ENCODE measurements at regions of chr6 and their contacts with region 1.

Region 1: GRCh38 chr6:163427498-163428254 is 13.2 kb downstream of the QKI start:
- DNase-seq: no peak
- ATAC-seq: peak in 5 of 8 donors; percentile 38 to 54 (median 41)
- H3K4me3 ChIP-seq: peak overlapping the region in 2 of 10 donors; percentile 9 to 12
- H3K27ac ChIP-seq: peak overlapping the region in 5 of 10 donors; percentile 1 to 36 (median 8)
- H3K4me1 ChIP-seq: peaks cover 3 to 100% (median 99%) of the 10 kb centered on the region in 9 donors
- H3K27me3 ChIP-seq: no peaks in the 10 kb centered on the region
- CTCF ChIP-seq: peak; percentile 9 to 65 (median 44)

Region 2: DNA sequence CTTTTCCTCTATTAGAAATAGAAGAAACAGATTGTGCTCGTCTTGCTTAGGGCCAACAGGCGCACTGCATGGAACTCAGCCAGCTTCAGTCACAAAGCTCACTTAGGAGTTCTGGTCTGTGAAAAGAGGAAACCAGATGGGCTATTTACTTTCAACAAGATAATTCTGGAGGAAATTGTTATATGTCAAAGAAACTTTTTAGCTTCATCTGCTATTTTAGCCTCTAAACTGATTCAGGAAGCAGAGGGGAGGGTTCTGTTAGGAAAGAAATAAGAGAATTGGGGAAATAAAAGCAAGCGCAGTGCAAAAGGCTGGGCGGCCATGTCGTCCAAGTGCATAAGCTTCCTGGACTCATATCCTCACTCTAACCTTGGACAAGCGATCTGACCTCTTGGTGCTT is 721.4 kb before region 1 on chr6:
- intact Hi-C with region 1: no loop called
- DNase-seq: peak; percentile 78 to 87
- ATAC-seq: peak; percentile 64 to 96 (median 90)
- H3K4me3 ChIP-seq: peak overlapping the region in 7 of 10 donors; percentile 7 to 37 (median 17)
- H3K27ac ChIP-seq: peak overlapping the region; percentile 30 to 86 (median 76)
- H3K4me1 ChIP-seq: peaks cover 0 to 35% (median 21%) of the 10 kb centered on the region in 9 donors
- H3K27me3 ChIP-seq: no peaks in the 10 kb centered on the region
- CTCF ChIP-seq: no peak

Region 3: GRCh38 chr6:163301726-163302635 is 125.7 kb before region 1 on chr6:
- intact Hi-C with region 1: no loop called
- DNase-seq: no peak
- ATAC-seq: peak; percentile 34 to 83 (median 61)
- H3K4me3 ChIP-seq: peak overlapping the region in 1 of 10 donors; percentile 11
- H3K27ac ChIP-seq: peak overlapping the region in 9 of 10 donors; percentile 18 to 79 (median 70)
- H3K4me1 ChIP-seq: peaks cover 0 to 36% (median 12%) of the 10 kb centered on the region in 9 donors
- H3K27me3 ChIP-seq: no peaks in the 10 kb centered on the region
- CTCF ChIP-seq: no peak

Region 4: DNA sequence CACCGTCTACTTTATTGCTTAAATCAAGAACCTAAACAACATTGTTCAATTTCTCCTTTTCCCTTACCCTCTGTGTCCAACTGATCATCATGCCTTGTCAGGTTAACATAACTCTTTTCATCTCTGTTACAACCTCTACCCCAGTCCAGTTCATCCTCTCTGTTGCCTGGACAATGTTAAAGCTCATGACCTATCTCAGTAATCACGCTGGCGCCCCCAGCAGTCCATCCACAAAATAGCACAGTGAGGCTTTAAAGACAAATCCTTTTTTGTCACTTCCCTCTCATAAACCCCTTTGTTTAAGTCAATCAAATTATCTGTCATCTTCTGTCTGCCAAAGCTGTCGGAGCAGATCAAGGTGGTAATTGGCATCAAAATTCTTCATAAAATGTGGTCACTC is 127.0 kb after region 1 on chr6:
- intact Hi-C with region 1: loop called in 3 of 10 experiments (anchors 10 kb)
- DNase-seq: peak in 1 of 2 donors; percentile 44
- ATAC-seq: peak in 4 of 8 donors; percentile 29 to 53 (median 45)
- H3K4me3 ChIP-seq: no peak overlapping the region
- H3K27ac ChIP-seq: peak overlapping the region in 2 of 10 donors; percentile 37 to 49
- H3K4me1 ChIP-seq: peaks cover 0 to 69% (median 34%) of the 10 kb centered on the region in 9 donors
- H3K27me3 ChIP-seq: no peaks in the 10 kb centered on the region
- CTCF ChIP-seq: peak in 8 of 9 donors; percentile 29 to 64 (median 54)

Region 5: DNA sequence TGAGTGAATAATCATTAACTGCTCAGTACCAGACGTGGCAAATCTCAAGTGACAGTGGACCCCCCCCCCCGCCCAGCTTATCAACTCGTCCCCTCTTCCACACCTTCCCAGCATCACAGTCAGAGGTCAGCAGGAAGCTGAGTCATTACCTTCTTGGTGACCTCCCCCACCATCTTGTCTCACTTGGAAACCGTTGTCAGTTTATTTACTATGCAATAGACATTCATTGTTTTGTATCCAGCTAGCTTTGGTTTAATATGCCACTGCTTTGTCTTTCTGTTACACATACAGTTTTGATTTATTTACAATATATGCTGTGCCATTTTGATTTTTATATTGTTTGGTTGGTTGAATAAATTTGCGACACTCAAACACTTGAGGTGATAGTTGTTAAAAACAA is 144.9 kb after region 1 on chr6:
- intact Hi-C with region 1: loop called in 4 of 10 experiments (anchors 5 to 10 kb)
- DNase-seq: no peak
- ATAC-seq: peak in 5 of 8 donors; percentile 30 to 80 (median 44)
- H3K4me3 ChIP-seq: no peak overlapping the region
- H3K27ac ChIP-seq: peak overlapping the region in 3 of 10 donors; percentile 4 to 7 (median 5)
- H3K4me1 ChIP-seq: peaks cover 0 to 56% (median 22%) of the 10 kb centered on the region in 9 donors
- H3K27me3 ChIP-seq: no peaks in the 10 kb centered on the region
- CTCF ChIP-seq: no peak

Region 6: GRCh38 chr6:163711615-163712565 is 284.2 kb after region 1 on chr6:
- intact Hi-C with region 1: loop called in 1 of 10 experiments (anchors 10 kb)
- DNase-seq: peak; percentile 80 to 83
- ATAC-seq: peak; percentile 67 to 81 (median 76)
- H3K4me3 ChIP-seq: no peak overlapping the region
- H3K27ac ChIP-seq: peak overlapping the region; percentile 69 to 86 (median 80)
- H3K4me1 ChIP-seq: peaks cover 28 to 68% (median 61%) of the 10 kb centered on the region in 9 donors
- H3K27me3 ChIP-seq: no peaks in the 10 kb centered on the region
- CTCF ChIP-seq: peak in 8 of 9 donors; percentile 17 to 59 (median 39)

Region 7: GRCh38 chr6:163764565-163764964 is 336.9 kb after region 1 on chr6:
- intact Hi-C with region 1: loop called in 1 of 10 experiments (anchors 10 kb)
- DNase-seq: no peak
- ATAC-seq: peak in 5 of 8 donors; percentile 49 to 82 (median 68)
- H3K4me3 ChIP-seq: no peak overlapping the region
- H3K27ac ChIP-seq: peak overlapping the region in 9 of 10 donors; percentile 8 to 74 (median 45)
- H3K4me1 ChIP-seq: peaks cover 0 to 23% (median 20%) of the 10 kb centered on the region in 9 donors
- H3K27me3 ChIP-seq: no peaks in the 10 kb centered on the region
- CTCF ChIP-seq: no peak

Region 8: DNA sequence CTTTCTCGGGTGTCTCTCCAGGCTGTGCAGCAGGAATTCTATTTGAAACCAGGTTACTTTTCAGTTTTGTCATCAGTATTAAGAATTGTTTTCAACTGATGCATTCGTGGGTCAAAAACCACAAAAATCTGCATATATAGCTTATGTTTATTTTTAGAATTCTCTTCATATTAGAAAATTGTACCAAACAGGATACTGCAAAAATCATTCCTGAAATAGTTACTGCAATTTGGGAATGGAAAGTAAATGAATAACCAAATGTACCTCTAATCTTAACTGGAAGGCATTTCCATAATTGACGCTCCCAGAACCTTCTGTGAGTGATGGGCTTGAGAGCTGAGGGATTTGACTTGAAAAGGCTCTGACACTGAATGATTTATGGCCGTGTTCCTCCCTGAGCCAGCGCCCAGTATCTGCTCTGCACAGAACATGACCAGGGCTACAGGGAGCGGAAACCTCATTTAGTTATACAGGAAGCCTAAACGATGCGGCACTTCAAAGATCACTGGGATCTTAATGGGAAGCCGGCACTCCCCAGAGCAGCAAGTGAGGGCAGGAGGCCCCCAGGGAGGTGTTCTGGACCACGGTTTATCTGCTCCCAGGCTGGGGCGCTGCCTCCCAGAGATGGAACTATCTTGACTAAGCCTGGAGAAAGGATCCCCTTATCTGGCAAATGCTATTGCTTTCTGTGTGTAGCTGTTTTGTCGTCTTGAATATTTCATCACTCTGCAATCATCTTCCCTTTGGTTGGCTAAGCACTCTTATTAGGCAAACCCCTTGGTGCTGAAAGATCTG is 432.8 kb after region 1 on chr6:
- intact Hi-C with region 1: no loop called
- DNase-seq: peak in 1 of 2 donors; percentile 27
- ATAC-seq: peak; percentile 42 to 78 (median 56)
- H3K4me3 ChIP-seq: peak overlapping the region in 7 of 10 donors; percentile 2 to 32 (median 25)
- H3K27ac ChIP-seq: no peak overlapping the region
- H3K4me1 ChIP-seq: peaks cover 0 to 14% (median 8%) of the 10 kb centered on the region in 9 donors
- H3K27me3 ChIP-seq: peaks cover 0 to 2% (median 0%) of the 10 kb centered on the region in 7 donors
- CTCF ChIP-seq: no peak

Region 9: GRCh38 chr6:164927288-164928056 is 1499.8 kb after region 1 on chr6:
- intact Hi-C with region 1: loop called in 2 of 10 experiments (anchors 5 to 10 kb)
- DNase-seq: peak; percentile 48 to 74
- ATAC-seq: peak; percentile 83 to 96 (median 92)
- H3K4me3 ChIP-seq: peak overlapping the region in 3 of 10 donors; percentile 10 to 18 (median 14)
- H3K27ac ChIP-seq: no peak overlapping the region
- H3K4me1 ChIP-seq: peaks cover 0 to 13% (median 7%) of the 10 kb centered on the region in 9 donors
- H3K27me3 ChIP-seq: no peaks in the 10 kb centered on the region
- CTCF ChIP-seq: peak; percentile 94 to 100 (median 97)